A673 (cell line): ENCODE measurements at regions of chr1 and their contacts with region 1.

Region 1: GRCh38 chr1:164786980-164787833 is 228.2 kb downstream of the PBX1 start:
- DNase-seq: peak; percentile 89
- H3K4me3 ChIP-seq: no peak overlapping the region
- H3K27ac ChIP-seq: no peak overlapping the region
- H3K4me1 ChIP-seq: peaks cover 29% of the 10 kb centered on the region
- H3K27me3 ChIP-seq: no peaks in the 10 kb centered on the region
- CTCF ChIP-seq: peak; percentile 93

Region 2: DNA sequence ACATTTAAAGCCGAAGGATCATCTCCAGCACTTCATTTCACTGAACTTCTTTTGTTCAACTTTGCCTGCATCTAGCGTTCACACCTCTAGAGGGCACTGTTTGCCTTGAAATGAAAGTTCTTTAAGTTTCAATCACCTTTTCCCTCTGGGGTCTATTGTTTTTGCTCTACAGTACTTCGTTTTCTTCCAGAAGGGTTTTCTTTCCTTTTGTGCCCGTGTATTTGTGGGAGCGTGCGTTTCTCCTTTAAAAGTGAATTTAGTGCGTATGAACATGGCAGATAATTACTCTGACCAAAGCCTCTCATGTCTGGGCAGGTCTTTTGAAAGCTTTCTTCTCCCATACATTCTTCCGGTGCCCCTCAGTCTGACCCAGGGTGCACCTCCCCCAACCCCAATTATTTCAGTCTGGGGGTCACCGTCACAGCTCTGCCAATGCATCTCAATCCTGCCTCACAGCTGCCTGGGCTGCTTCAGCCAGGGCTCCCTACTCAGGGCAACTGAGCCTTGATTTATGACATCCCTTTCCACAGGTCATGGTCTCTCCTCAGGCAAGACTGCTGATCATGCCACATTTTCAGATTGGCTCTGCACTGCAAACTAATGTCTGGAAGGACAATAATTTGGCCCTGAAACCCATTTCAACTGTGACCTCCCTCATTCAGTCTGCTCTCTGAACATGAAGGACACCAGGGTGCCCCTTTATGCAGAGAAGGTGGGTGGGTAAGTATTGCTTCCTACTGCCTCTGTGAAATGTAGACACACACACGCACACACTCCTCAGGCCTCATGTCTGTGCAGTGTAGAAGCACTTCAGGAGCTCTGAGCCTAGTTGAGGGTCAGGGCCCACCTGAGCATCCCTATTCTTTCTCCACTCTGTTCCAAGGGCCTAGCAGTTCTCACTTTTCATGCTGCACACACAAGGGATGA is 1376.9 kb before region 1 on chr1:
- CTCF ChIA-PET with region 1: no interaction called
- POLR2A ChIA-PET with region 1: no interaction called
- intact Hi-C with region 1: loop called (anchors 2 kb)
- DNase-seq: peak; percentile 91
- H3K4me3 ChIP-seq: peak overlapping the region; percentile 2
- H3K27ac ChIP-seq: peak overlapping the region; percentile 2
- H3K4me1 ChIP-seq: peaks cover 28% of the 10 kb centered on the region
- H3K27me3 ChIP-seq: no peaks in the 10 kb centered on the region
- CTCF ChIP-seq: peak; percentile 92

Region 3: GRCh38 chr1:163589735-163590134 is 1197.5 kb before region 1 on chr1:
- CTCF ChIA-PET with region 1: no interaction called
- POLR2A ChIA-PET with region 1: no interaction called
- intact Hi-C with region 1: loop called (anchors 5 kb)
- DNase-seq: peak; percentile 98
- H3K4me3 ChIP-seq: no peak overlapping the region
- H3K27ac ChIP-seq: peak overlapping the region; percentile 98
- H3K4me1 ChIP-seq: peaks cover 59% of the 10 kb centered on the region
- H3K27me3 ChIP-seq: no peaks in the 10 kb centered on the region
- CTCF ChIP-seq: no peak

Region 4: DNA sequence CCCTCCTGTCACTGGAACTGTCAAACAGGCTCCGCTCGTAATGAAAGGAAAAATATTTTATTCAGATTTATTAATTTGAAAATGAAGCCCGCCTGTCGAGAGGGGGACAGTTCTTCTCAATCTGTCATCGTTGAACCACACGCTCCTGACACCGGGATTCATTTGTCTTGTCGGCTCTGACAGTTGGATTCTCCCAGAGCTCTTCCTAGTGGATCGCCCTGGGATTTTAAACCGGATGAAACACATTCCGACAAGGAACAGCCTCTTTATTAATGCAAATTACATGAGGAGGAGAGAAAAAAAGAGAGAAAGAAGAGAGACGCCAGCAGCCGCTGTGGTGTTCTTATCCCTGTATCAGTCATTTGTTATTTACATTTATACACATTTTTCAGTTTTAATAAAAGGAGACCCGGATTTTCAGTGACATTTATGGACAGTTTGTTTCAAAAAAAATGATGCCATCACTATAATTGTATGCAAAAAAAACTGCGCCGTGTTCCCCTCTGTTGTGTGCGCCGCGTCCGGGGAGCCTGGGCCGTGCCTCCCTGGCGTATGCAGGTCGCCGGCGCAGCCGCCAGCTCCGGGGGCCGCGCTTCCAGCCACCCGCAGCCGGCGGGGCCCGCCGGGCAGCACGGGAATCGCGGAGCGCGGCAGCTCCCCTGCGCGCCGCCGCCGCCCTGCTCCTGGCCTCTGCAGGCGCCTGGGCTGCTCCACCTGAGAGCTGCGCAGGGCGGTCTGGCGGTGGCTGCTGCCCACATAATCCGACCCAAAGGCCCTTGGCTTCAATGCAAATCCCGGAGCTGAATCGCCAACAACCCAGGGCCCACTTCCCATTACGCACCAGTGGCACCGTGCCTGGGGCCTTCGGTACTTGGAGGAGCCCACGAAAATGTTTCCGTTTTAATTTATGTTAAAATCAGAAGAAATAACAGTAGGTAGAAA is 466.1 kb before region 1 on chr1:
- CTCF ChIA-PET with region 1: no interaction called
- POLR2A ChIA-PET with region 1: no interaction called
- intact Hi-C with region 1: loop called (anchors 5 kb)
- DNase-seq: peak; percentile 35
- H3K4me3 ChIP-seq: peak overlapping the region; percentile 50
- H3K27ac ChIP-seq: no peak overlapping the region
- H3K4me1 ChIP-seq: no peaks in the 10 kb centered on the region
- H3K27me3 ChIP-seq: no peaks in the 10 kb centered on the region
- CTCF ChIP-seq: no peak

Region 5: GRCh38 chr1:165073185-165074007 is 286.2 kb after region 1 on chr1:
- CTCF ChIA-PET with region 1: no interaction called
- POLR2A ChIA-PET with region 1: no interaction called
- intact Hi-C with region 1: loop called (anchors 10 kb)
- DNase-seq: peak; percentile 75
- H3K4me3 ChIP-seq: no peak overlapping the region
- H3K27ac ChIP-seq: no peak overlapping the region
- H3K4me1 ChIP-seq: no peaks in the 10 kb centered on the region
- H3K27me3 ChIP-seq: no peaks in the 10 kb centered on the region
- CTCF ChIP-seq: peak; percentile 74